Ascending aorta (tissue), 2 donors: ENCODE measurements at regions of chr3 and their contacts with region 1.

Region 1: DNA sequence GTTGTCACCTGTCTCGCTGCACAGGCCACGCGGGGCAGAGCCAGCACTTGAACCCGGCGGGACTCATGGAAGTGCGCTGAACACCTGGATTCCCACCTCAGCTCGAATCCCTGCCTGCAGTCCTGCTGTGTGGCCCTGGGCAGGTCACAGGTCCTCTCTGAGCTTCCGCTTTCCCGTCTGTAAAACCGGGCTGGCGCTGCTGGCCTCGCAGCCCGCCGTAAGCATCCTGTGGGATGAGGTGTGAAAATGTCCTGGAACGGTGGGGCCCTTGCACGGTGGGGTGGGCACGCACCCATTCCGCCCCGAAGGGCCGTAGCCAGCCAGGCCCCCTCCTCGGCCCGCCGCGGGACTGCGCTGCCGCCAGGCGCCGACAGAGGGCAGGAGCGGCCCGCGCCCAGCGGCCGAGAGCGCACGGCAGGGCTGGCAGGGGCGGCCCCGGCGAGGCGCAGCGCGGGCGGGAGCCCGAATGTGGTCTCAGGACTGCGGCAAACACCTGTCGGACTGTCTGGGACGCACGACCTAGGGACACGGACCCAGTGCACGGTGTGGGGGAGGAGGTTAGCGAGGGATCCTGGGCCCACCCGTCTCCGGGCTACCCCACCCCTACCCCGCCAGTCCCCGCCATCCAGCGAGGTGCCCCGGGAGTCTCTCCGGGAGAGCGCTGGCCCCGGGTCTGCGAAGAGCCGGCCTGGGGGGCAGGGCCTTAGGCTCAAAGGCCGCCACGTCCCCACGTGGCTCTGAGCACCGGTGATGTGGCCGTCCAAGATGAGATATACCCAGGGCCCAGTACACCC is 40.4 kb downstream of the DNAJB8 start:
- DNase-seq: no peak
- H3K4me3 ChIP-seq: peak overlapping the region; percentile 28 to 53
- H3K27ac ChIP-seq: no peak overlapping the region
- H3K4me1 ChIP-seq: peaks cover 0 to 2% of the 10 kb centered on the region in 2 donors
- H3K27me3 ChIP-seq: no peaks in the 10 kb centered on the region
- CTCF ChIP-seq: peak; percentile 57 to 95 (median 72)

Region 2: DNA sequence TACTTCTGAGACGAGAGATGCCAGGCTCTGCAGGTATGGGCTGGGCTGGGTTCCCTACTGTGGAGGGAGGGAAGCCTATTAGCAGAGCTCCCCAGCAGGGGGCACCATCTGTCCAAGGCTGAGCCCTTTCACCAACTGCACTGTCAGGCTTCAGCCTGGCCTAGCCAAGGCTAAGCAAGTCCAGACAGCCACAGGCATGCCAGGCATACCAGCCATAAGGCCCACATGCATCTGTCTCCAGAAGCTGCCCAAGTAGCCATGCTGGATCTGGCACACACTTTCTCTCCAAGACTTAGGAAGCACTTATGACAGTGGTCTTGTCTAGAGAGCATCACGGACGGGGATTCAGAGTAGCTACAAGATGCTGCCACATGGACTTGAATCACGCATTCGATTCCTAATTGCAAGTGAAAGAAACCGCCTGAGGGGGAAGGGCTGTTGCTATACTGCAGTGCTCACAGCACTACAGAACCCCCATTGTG is 331.1 kb before region 1 on chr3:
- intact Hi-C with region 1: loop called (anchors 10 kb)
- DNase-seq: peak in 1 of 2 donors; percentile 83
- H3K4me3 ChIP-seq: no peak overlapping the region
- H3K27ac ChIP-seq: no peak overlapping the region
- H3K4me1 ChIP-seq: peaks cover 0 to 3% of the 10 kb centered on the region in 2 donors
- H3K27me3 ChIP-seq: no peaks in the 10 kb centered on the region
- CTCF ChIP-seq: peak; percentile 70 to 72 (median 70)